RWPE1 (cell line): ENCODE measurements at regions of chr10 and their contacts with region 1.

Region 1: GRCh38 chr10:78115135-78115853 is 81.6 kb downstream of the RPS24 start:
- DNase-seq: no peak
- H3K27ac ChIP-seq: no peak overlapping the region
- CTCF ChIP-seq: no peak

Region 2: DNA sequence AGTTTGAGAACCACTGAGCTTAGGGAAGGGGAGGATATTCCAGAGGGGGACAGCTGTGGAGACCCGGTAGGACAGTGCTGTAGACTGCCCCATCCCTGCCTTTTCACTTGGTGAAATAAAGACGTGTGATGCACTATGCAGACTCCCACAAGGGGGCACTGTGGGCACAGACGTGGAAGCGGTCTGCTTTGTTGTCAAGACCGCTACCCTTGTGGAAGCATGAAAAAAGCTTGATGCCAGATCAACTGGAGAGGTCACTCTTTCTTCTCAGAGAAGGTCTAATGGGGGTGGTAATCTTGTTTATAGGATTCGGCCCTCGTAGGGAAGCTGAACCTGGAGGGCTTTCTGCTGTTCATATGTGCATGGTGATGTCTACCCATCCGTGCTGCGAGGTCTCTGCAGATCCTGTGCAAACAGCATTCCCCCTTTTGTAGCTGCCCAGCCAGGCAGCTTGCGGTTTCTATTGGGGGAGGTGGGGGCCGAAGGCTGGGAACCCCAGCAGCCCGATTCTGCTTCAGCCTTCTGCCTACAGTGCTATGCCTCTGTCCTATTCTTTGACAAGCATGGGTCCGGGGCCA is 67.9 kb before region 1 on chr10:
- CTCF ChIA-PET with region 1: interaction called, 11 read pairs
- POLR2A ChIA-PET with region 1: no interaction called
- DNase-seq: peak; percentile 75
- H3K27ac ChIP-seq: no peak overlapping the region
- CTCF ChIP-seq: peak; percentile 91

Region 3: GRCh38 chr10:78424719-78425118 is 309.4 kb after region 1 on chr10:
- CTCF ChIA-PET with region 1: no interaction called
- POLR2A ChIA-PET with region 1: no interaction called
- DNase-seq: peak; percentile 25
- H3K27ac ChIP-seq: no peak overlapping the region
- CTCF ChIP-seq: no peak; the same call in 1 of the 2 replicates